ENCODE measurements at regions of chr14 and their contacts with region 1.

Region 1: GRCh38 chr14:99604283-99604765 is 317 bp upstream of the CCDC85C start:
- DNase-seq: peak; percentile 92
- H3K4me3 Mint-ChIP-seq: peak overlapping the region; percentile 86
- H3K27ac Mint-ChIP-seq: peak overlapping the region; percentile 78
- H3K4me1 Mint-ChIP-seq: peaks cover 29% of the 10 kb centered on the region
- H3K27me3 Mint-ChIP-seq: peaks cover 2% of the 10 kb centered on the region

Region 2: DNA sequence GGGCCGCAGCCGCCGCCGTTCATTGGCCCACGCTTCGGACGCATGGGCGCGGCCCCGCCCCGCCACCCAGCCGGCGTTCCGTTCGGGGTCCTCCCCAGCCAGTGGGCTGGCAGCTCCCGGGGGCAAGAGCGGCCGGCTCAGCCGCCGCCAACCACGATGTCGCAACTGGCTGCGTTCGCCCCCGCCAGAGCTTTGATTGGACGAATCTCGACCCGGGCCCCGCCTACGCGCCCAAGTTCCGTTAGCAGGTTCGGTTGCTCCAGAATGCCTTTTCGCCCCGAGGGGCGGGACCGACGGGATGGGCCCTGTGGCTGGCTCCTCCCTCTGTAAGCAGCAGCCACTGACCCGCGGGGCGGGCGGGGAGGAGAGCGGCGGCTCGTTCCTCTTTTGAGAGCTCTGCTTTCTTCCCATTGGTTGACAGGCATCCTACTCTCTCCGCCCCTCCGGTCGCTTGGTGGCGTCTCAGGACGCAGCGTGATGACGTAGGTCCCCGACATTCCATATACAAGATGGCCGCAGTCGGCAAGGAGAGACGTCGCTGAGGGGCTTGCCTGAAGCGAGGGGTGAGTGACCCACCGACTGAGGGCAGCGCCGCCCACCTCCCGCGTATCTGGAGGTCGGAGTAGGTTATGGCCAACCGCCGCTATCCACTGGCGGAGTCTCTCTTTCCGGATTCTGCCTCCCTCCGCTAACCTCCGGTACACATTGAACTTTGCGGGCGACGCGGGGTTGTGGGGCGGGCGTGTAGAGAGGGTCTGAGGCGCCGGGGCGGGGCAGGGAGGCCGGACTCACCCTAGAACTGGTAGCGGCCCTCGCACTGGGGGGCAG is 123.2 kb before region 1 on chr14 and contains the start of gene CCNK:
- CTCF ChIA-PET with region 1: no interaction called
- intact Hi-C with region 1: loop called (anchors 1 kb)
- DNase-seq: peak; percentile 100
- H3K4me3 Mint-ChIP-seq: peak within 1 kb of the TSS; percentile 90
- H3K27ac Mint-ChIP-seq: peak within 1 kb of the TSS; percentile 91
- H3K4me1 Mint-ChIP-seq: peaks cover 53% of the 10 kb centered on the region
- H3K27me3 Mint-ChIP-seq: no peaks in the 10 kb centered on the region
- total RNA-seq, gene CCNK: 90.7 to 99.0 TPM

Measured in activated naive CD4-positive, alpha-beta T cell treated with anti-CD3 and anti-CD28 coated beads for 36 hours (primary cell).